PC-3 (cell line): ENCODE measurements at regions of chr6 and their contacts with region 1.

Region 1: DNA sequence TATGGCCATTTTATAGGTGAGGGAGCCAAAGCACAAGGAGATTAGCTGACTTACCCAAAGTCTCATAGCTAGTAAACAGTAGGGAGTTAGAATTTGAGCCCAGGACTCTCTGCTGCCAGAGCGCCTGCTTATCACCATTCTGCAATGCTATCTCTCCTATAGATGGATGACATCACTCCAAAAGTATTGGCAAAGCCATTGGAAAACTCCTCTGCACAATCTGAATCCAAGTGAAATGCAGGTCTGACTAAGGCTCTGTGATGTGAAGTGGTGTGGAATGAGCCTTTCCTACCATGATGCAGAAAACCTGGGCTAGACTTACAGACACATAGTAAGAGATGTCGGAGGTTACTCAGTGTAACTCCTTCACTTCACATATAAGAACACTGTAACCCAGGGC is 106.3 kb downstream of the GRM1 start:
- DNase-seq: no peak
- ATAC-seq: no peak
- H3K4me3 ChIP-seq: no peak overlapping the region
- H3K27ac ChIP-seq: no peak overlapping the region
- H3K4me1 ChIP-seq: no peaks in the 10 kb centered on the region
- H3K27me3 ChIP-seq: peaks cover 8% of the 10 kb centered on the region; the same call in 1 of the 2 replicates
- CTCF ChIP-seq: no peak

Region 2: GRCh38 chr6:146679386-146679785 is 544.2 kb after region 1 on chr6:
- CTCF ChIA-PET with region 1: no interaction called
- POLR2A ChIA-PET with region 1: interaction called, 11 read pairs
- intact Hi-C with region 1: no loop called
- DNase-seq: no peak
- ATAC-seq: no peak
- H3K4me3 ChIP-seq: no peak overlapping the region
- H3K27ac ChIP-seq: no peak overlapping the region
- H3K4me1 ChIP-seq: no peaks in the 10 kb centered on the region
- H3K27me3 ChIP-seq: peaks cover 23% of the 10 kb centered on the region; the same call in 1 of the 2 replicates
- CTCF ChIP-seq: no peak